Esophagus muscularis mucosa (tissue), 4 donors: ENCODE measurements at regions of chr21 and their contacts with region 1.

Region 1: DNA sequence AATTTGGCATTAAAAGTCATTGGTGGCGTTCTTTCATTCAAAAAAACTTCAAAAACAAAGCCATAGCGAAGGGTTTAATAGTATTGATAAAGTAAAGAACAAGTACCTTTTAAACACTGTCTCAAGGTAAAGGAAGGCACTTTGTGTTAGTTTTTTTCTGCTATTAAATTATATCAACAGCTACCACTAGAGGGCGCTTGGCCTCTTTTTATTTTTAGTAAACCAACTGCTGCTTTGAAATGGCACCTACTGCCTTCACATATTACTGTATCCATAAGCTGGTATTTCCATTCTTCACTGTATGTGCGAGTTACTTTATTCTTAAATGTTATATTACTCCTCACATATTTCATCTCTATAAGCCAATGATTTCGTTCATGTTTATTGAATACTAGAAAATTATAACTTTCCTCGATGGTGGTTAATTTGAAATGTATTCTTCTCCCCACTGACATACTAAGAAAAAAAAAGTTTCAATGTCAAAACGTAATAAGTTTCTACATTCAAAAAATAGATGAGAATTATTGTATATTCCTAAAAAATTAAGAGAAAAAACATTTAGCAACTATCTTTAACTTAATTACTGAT is 125.7 kb upstream of the CXADR start:
- DNase-seq: no peak
- H3K4me3 ChIP-seq: no peak overlapping the region
- H3K27ac ChIP-seq: no peak overlapping the region
- H3K4me1 ChIP-seq: no peaks in the 10 kb centered on the region
- H3K27me3 ChIP-seq: no peaks in the 10 kb centered on the region
- CTCF ChIP-seq: peak; percentile 66 to 77 (median 76)
- EP300 ChIP-seq: no peak
- POLR2A ChIP-seq: no peak

Region 2: DNA sequence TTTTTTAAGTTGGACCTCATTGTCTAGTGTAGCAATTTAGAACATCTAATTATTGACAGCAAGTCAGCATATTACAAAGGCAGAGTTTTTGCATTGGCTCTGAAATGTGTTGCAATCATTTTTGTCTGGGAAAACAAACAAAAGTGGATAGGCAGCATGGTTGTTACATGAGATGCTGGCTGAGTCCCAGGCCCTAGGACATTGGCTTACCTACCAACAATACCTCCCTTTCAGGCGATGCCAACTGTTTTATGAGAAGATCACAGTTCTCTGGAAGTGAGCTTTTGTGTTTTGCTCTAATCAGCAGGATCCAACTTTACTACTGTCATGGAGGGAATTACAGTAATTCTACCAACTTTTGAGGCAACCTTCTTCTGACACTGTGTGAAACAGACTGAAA is 54.2 kb after region 1 on chr21:
- intact Hi-C with region 1: no loop called
- DNase-seq: no peak
- H3K4me3 ChIP-seq: no peak overlapping the region
- H3K27ac ChIP-seq: no peak overlapping the region
- H3K4me1 ChIP-seq: no peaks in the 10 kb centered on the region
- H3K27me3 ChIP-seq: peaks cover 0 to 4% (median 0%) of the 10 kb centered on the region in 4 donors
- CTCF ChIP-seq: no peak
- EP300 ChIP-seq: no peak
- POLR2A ChIP-seq: no peak

Region 3: GRCh38 chr21:17585875-17586450 is 198.8 kb after region 1 on chr21:
- intact Hi-C with region 1: loop called (anchors 2 kb)
- DNase-seq: no peak
- H3K4me3 ChIP-seq: no peak overlapping the region
- H3K27ac ChIP-seq: no peak overlapping the region
- H3K4me1 ChIP-seq: no peaks in the 10 kb centered on the region
- H3K27me3 ChIP-seq: no peaks in the 10 kb centered on the region
- CTCF ChIP-seq: peak; percentile 52 to 66 (median 65)
- EP300 ChIP-seq: no peak
- POLR2A ChIP-seq: no peak